ENCODE measurements at regions of chr2 and their contacts with region 1.

Region 1: GRCh38 chr2:11784747-11785610 is 38.5 kb downstream of the LPIN1 start:
- DNase-seq: peak; percentile 34 to 65
- ATAC-seq: peak; percentile 70 to 96; a peak in 5 of 6 replicates
- H3K4me3 ChIP-seq: no peak overlapping the region
- H3K27ac ChIP-seq: no peak overlapping the region
- H3K4me1 ChIP-seq: no peaks in the 10 kb centered on the region
- CTCF ChIP-seq: peak; percentile 92
- EP300 ChIP-seq: no peak
- POLR2A ChIP-seq: no peak
- RAD21 ChIP-seq: peak; percentile 27 to 64; a peak in 4 of 5 replicates

Region 2: GRCh38 chr2:11305338-11305737 is 479.6 kb before region 1 on chr2:
- CTCF ChIA-PET with region 1: no interaction called
- POLR2A ChIA-PET with region 1: no interaction called
- DNase-seq: no peak
- ATAC-seq: no peak
- H3K4me3 ChIP-seq: no peak overlapping the region
- H3K27ac ChIP-seq: no peak overlapping the region
- H3K4me1 ChIP-seq: peaks cover 27% of the 10 kb centered on the region
- CTCF ChIP-seq: no peak
- EP300 ChIP-seq: no peak
- POLR2A ChIP-seq: no peak
- RAD21 ChIP-seq: no peak

Region 3: GRCh38 chr2:11743846-11744553 is 41.0 kb before region 1 on chr2:
- CTCF ChIA-PET with region 1: interaction called, 66 read pairs
- POLR2A ChIA-PET with region 1: no interaction called
- DNase-seq: peak; percentile 99 to 100
- ATAC-seq: peak; percentile 87 to 96
- H3K4me3 ChIP-seq: peak overlapping the region; percentile 24; the same call in 1 of the 3 replicates
- H3K27ac ChIP-seq: peak overlapping the region; percentile 86 to 90
- H3K4me1 ChIP-seq: peaks cover 48% of the 10 kb centered on the region
- CTCF ChIP-seq: 0 out of 3 replicates have a peak, but pooled peaks have one; percentile 32
- EP300 ChIP-seq: peak in 1 of 2 experiments; percentile 44; a peak in 1 of 5 replicates
- POLR2A ChIP-seq: no peak
- RAD21 ChIP-seq: 0 out of 5 replicates have a peak, but pooled peaks of 1 of the 2 experiments have one; percentile 19

Region 4: DNA sequence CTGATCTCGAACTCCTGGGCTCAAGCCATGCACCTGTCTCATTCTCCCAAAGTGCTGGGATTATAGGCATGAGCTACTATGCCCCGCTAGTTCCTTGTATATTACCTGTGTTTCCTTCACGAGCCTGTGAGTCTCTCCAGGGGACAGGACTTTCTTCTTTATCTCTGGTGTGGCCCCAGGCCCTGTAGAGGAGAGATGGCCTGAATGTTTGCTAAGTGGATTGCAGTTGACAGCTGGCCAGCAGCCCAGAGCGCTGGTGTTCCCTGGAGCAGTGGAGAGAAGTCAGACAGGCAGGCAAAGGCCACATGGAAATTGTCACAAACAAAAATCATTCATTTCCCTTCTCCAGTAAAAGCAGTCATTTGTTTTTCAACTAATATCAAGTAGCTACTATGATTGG is 20.6 kb before region 1 on chr2:
- CTCF ChIA-PET with region 1: interaction called, 20 read pairs
- POLR2A ChIA-PET with region 1: no interaction called
- DNase-seq: no peak
- ATAC-seq: no peak
- H3K4me3 ChIP-seq: no peak overlapping the region
- H3K27ac ChIP-seq: no peak overlapping the region
- H3K4me1 ChIP-seq: peaks cover 5% of the 10 kb centered on the region; the same call in 1 of the 3 replicates
- CTCF ChIP-seq: no peak
- EP300 ChIP-seq: no peak
- POLR2A ChIP-seq: no peak
- RAD21 ChIP-seq: no peak

Region 5: GRCh38 chr2:11796190-11797171 is 11.5 kb after region 1 on chr2:
- CTCF ChIA-PET with region 1: interaction called, 24 read pairs
- POLR2A ChIA-PET with region 1: no interaction called
- DNase-seq: no peak
- ATAC-seq: no peak
- H3K4me3 ChIP-seq: no peak overlapping the region
- H3K27ac ChIP-seq: no peak overlapping the region
- H3K4me1 ChIP-seq: no peaks in the 10 kb centered on the region
- CTCF ChIP-seq: no peak
- EP300 ChIP-seq: no peak
- POLR2A ChIP-seq: no peak
- RAD21 ChIP-seq: no peak

Measured in A549 (cell line).